ENCODE measurements at regions of chr10 and their contacts with region 1.

Region 1: DNA sequence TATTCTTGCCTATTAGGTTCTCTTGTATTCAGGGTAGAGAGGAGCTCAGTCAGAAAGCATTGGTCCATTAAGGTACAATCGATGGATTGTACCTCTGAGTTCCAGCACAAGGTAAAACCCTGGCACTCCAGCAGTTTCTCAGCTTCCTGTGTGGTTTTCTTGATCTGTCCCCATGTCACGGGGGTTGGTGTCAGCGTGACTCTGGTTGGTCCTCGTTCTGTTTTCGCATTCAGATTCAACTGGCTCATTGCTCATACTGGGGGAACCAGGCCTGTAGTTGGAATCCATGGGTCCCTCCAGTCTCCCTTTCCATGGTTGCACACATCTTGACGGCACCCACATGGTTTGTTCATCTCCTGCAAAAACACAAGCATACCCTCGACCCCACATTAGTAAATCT is 32.7 kb upstream of the RASGEF1A start:
- DNase-seq: no peak
- H3K4me3 ChIP-seq: no peak overlapping the region
- H3K27ac ChIP-seq: no peak overlapping the region
- H3K4me1 ChIP-seq: peaks cover 0 to 7% (median 4%) of the 10 kb centered on the region in 3 donors
- H3K27me3 ChIP-seq: peaks cover 0 to 41% (median 0%) of the 10 kb centered on the region in 4 donors
- CTCF ChIP-seq: no peak
- POLR2A ChIP-seq: no peak

Region 2: DNA sequence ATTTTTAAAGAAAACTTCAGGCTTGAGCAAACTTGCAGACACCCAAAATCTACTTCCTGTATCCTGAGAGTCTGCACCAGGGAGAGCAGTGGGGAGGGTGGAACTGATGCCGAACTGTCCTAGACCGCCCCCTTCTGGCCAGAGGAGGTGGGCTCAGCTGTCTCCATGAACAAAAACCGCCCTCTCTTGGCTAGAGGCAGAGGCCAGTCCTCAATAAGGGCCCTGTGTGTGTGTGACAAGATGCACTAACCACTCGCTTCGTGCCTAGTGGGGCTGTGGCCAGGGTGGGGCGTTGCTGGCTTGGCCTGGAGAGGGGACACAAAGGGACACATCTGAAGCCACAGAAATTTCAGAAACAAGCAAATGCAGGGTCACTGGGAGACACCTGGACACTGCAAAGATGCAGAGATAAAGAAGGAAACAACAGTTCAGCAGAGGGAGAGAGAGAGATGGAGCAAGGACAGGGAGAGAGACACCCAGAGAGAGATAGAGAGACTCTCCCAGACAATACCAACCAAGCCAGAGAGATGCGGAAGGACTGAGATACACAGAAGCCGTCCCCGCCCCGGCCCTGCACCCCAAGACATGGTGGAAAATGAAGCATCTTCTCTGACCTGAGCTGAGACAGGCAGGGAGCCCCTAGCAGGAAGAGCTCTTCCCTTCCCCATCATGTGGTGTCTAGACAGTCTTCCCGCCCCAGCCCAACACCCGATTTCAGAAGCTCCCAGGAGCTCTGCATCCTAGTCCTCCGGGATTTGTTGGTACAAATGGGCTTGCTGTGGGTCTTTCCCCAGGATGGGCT is 49.1 kb after region 1 on chr10:
- intact Hi-C with region 1: loop called (anchors 5 kb)
- DNase-seq: peak; percentile 28
- H3K4me3 ChIP-seq: no peak overlapping the region
- H3K27ac ChIP-seq: no peak overlapping the region
- H3K4me1 ChIP-seq: peaks cover 0 to 15% (median 0%) of the 10 kb centered on the region in 3 donors
- H3K27me3 ChIP-seq: peaks cover 0 to 26% (median 3%) of the 10 kb centered on the region in 4 donors
- CTCF ChIP-seq: peak; percentile 82 to 94 (median 90)
- POLR2A ChIP-seq: no peak